ENCODE measurements at regions of chr6 and their contacts with region 1.

Region 1: DNA sequence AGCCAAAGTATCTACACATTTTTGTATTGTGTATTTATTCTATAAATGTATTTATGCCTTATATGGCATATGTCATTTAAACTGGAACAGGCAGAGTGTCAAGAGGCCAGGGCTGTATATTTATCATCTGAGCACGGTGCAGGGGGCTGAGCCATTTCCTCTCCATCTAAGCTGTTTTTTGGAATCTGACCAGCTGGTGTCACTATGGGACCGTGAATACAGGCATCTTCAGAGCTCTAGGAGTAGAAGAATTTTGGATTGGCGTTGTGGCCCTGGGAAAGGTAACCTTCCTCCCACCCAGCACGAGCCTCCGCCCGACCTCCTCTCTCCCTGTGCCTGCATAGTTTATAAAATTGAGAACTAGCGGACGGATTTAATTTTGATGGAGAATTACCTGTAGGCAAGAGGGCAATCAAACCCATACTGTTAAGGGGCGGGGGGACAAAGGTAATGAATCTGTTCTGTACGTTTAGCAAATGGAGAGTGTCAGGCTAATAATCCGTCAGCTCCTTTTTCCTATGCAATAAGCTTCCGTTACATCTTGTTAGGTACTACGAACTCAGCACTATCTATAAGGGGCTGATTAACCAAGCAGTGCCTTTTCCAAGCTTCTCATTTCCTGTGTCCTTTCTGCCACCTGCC is 29.0 kb upstream of the EEF1E1 start:
- DNase-seq: peak; percentile 54 to 82
- H3K4me3 ChIP-seq: no peak overlapping the region
- H3K27ac ChIP-seq: no peak overlapping the region
- H3K4me1 ChIP-seq: no peaks in the 10 kb centered on the region
- H3K27me3 ChIP-seq: peaks cover 0 to 5% (median 0%) of the 10 kb centered on the region in 3 donors
- CTCF ChIP-seq: peak in 4 of 7 experiments; percentile 18 to 57 (median 43)
- EP300 ChIP-seq: no peak
- POLR2A ChIP-seq: no peak

Region 2: DNA sequence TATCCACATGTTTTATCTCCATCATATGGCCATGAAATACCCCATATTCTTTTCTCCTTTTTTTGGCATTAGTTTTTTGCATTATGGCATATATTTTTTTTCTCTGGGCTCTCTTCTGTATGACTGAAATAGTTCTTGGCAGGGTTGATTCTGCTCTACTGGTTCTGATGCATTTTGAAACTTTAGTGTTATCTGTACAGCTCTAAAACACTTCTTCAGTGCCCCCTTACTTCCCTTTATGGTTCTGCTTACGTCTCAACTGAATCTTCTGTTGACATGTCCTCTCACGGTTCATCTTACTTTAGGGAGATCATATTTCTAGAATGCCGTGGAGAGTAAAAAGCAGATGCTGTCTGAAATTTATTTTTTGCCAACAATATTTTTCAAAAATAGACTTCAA is 197.6 kb before region 1 on chr6:
- intact Hi-C with region 1: no loop called
- DNase-seq: no peak
- H3K4me3 ChIP-seq: no peak overlapping the region
- H3K27ac ChIP-seq: no peak overlapping the region
- H3K4me1 ChIP-seq: no peaks in the 10 kb centered on the region
- H3K27me3 ChIP-seq: no peaks in the 10 kb centered on the region
- CTCF ChIP-seq: no peak
- EP300 ChIP-seq: no peak
- POLR2A ChIP-seq: no peak

Region 3: DNA sequence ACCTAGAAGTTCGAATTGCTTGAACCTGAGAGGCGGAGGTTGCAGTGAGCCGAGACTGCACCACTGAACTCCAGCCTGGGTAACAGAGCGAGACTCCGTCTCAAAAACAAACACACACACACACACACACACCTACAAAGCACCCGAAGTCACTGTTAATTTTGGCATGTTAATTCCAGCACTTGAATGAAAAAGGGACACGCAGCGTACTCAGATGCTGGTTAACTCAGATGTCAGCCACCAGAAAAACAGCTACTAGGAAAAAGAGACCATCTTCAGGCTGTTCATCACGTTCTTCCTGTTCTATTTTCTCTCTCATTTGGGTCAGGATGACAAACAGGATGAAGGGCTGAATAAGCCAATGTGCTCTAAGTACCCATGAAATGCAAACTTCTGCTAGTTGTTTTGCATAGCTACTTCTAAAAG is 114.1 kb before region 1 on chr6:
- intact Hi-C with region 1: no loop called
- DNase-seq: no peak
- H3K4me3 ChIP-seq: no peak overlapping the region
- H3K27ac ChIP-seq: no peak overlapping the region
- H3K4me1 ChIP-seq: peaks cover 0 to 10% (median 4%) of the 10 kb centered on the region in 4 donors
- H3K27me3 ChIP-seq: no peaks in the 10 kb centered on the region
- CTCF ChIP-seq: no peak
- EP300 ChIP-seq: no peak
- POLR2A ChIP-seq: no peak

Region 4: GRCh38 chr6:8219352-8219943 is 88.1 kb after region 1 on chr6:
- intact Hi-C with region 1: loop called (anchors 5 kb)
- DNase-seq: peak; percentile 42 to 79
- H3K4me3 ChIP-seq: no peak overlapping the region
- H3K27ac ChIP-seq: no peak overlapping the region
- H3K4me1 ChIP-seq: peaks cover 0 to 6% (median 0%) of the 10 kb centered on the region in 4 donors
- H3K27me3 ChIP-seq: peaks cover 0 to 16% (median 0%) of the 10 kb centered on the region in 3 donors
- CTCF ChIP-seq: peak in 5 of 7 experiments; percentile 38 to 81 (median 68)
- EP300 ChIP-seq: no peak
- POLR2A ChIP-seq: no peak